Activated T-helper 1 cell treated with anti-CD3 and anti-CD28 coated beads, Interleukin-12 subunit alpha, Interleukin-12 subunit beta, Interleukin-2, Interleukin-4 antibody, amounts not matched to agents 30 ng/mL and 10 ng/mL and 1 ng/mL, durations not matched to agents 14 hours and 24 hours and 36 hours (primary cell): ENCODE measurements at regions of chr19 and their contacts with region 1.

Region 1: DNA sequence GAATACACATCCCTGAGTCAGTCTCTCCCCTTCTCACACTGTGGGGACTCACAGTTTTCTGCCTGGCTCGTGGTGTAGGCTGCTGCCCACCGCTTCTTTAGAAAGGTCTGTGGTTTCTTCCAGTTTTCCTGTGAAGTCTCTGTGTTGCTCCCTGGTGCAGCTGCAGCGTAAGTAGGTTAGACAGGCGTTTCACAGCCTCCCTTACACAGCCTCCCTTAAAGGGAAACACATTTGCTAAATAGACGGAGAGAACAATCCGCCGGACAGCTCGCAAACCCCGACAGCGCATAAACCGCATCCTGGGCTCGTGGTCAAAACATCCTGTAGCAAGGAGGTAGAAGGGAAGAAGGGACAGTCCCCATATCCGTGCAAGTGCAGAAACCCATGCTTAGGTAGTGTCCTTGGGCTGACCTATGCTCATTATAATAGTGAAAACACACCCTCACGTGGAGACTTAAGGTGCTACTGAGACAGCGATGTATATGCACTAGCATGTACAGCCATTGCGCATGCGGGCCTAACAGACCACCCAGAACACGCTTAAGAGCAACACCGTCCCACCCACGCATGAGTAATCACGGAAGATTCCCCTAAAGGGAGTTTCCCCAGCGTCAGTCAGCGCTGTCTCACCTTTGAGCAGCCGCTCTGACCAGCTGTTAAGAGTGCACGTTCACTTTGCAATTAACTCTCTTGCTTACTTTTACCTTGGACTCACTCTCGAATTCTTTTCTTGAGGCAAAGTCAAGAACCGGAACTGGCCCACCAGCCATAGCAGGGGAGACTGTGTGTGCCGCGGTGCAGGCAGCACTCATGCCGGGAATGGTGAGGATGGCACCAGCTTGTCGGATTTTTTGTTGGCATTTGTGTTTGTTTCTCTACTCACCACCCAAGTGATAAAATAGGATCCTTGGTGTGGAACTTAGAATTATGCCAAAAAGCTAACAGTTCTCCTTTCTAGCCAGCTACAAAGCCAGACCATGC is 16.6 kb downstream of the SIGLEC8 start:
- DNase-seq: peak; percentile 85
- H3K4me3 Mint-ChIP-seq: peak overlapping the region; percentile 61
- H3K27ac Mint-ChIP-seq: peak overlapping the region; percentile 95
- H3K4me1 Mint-ChIP-seq: peaks cover 76% of the 10 kb centered on the region
- H3K27me3 Mint-ChIP-seq: peaks cover 19% of the 10 kb centered on the region

Region 2: DNA sequence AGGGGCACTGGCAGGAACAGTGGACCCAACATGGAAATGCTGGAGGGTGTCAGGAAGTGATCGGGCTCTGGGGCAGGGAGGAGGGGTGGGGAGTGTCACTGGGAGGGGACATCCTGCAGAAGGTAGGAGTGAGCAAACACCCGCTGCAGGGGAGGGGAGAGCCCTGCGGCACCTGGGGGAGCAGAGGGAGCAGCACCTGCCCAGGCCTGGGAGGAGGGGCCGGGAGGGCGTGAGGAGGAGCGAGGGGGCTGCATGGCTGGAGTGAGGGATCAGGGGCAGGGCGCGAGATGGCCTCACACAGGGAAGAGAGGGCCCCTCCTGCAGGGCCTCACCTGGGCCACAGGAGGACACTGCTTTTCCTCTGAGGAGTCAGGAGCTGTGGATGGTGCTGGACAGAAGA is 564.4 kb before region 1 on chr19:
- intact Hi-C with region 1: no loop called
- DNase-seq: no peak
- H3K4me3 Mint-ChIP-seq: no peak overlapping the region
- H3K27ac Mint-ChIP-seq: no peak overlapping the region
- H3K4me1 Mint-ChIP-seq: no peaks in the 10 kb centered on the region
- H3K27me3 Mint-ChIP-seq: peaks cover 13% of the 10 kb centered on the region

Region 3: DNA sequence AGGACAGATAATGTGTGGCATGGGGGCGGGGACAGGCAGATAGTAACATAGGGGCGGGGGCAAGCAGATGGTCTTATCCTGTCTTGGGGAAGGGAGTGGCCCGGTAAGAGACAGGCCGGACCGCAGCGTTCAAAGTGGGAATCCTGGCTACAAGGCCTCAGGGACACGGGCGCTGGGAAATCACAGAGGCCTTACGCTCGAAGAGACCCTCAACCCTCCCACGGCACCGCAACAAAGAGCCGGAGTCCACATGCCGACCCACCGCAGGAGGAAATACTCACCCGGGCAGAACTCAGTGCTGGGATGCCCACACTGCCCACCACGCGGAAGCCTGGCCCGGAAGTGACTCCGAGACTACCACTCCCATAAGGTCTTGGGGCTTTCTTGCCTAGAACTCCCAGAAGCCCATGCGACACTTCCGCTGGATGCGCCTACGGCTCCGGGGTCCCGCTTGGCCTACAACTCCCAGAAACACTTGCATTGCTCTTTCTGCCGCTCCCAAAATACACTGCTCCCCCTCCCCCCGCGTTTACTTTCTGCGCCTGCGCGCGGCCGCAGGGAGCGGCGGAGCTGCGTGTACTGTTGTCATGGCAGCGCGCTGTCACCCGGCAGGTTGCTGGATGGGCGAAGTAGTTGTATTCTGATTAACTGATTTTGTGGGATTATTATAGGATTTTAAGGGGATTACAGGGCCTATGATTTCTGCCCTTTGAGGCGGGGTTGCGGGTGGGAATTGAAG is 333.5 kb before region 1 on chr19 and contains the start of gene CTU1:
- intact Hi-C with region 1: loop called (anchors 1 kb)
- DNase-seq: peak; percentile 98
- H3K4me3 Mint-ChIP-seq: peak within 1 kb of the TSS; percentile 92
- H3K27ac Mint-ChIP-seq: peak within 1 kb of the TSS; percentile 96
- H3K4me1 Mint-ChIP-seq: peaks cover 24% of the 10 kb centered on the region
- H3K27me3 Mint-ChIP-seq: no peaks in the 10 kb centered on the region
- total RNA-seq, gene CTU1: 12.5 and 14.0 TPM in 2 replicates

Region 4: DNA sequence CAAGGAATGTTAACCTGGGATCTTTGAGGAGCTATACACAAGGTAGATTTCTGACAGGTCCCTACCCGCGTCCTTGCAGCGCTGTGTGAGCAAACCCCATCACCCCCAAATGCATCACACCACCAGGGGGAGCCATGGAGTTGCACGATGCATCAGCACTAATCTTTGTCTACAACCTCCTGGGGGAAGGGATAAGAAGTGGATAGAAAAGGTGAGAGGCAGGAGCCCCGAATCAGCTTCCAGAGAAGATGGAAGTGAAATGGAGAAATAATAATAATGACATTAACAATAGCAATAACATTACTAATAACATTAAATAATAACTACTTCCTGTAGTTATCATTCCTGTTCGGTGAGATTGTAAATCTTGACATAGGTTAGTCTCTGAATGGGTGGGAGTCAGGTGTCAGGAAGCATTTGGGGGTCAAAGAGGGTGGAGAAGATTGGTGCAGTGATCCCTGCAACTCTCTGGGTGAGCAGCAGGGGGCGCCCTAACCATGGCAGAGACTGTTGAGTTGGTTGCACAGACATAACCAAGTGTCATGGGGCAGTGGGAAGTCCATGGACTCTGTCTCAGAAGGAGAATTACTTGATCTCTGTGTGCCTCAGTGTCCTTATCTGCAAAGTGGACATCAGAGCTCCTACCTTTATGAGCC is 283.1 kb before region 1 on chr19:
- intact Hi-C with region 1: loop called (anchors 2 kb)
- DNase-seq: peak; percentile 60
- H3K4me3 Mint-ChIP-seq: no peak overlapping the region
- H3K27ac Mint-ChIP-seq: peak overlapping the region; percentile 41
- H3K4me1 Mint-ChIP-seq: peaks cover 9% of the 10 kb centered on the region
- H3K27me3 Mint-ChIP-seq: peaks cover 5% of the 10 kb centered on the region

Region 5: GRCh38 chr19:51367565-51368365 is 73.9 kb before region 1 on chr19:
- intact Hi-C with region 1: loop called (anchors 1 kb)
- DNase-seq: peak; percentile 95
- H3K4me3 Mint-ChIP-seq: peak overlapping the region; percentile 98
- H3K27ac Mint-ChIP-seq: peak overlapping the region; percentile 96
- H3K4me1 Mint-ChIP-seq: peaks cover 68% of the 10 kb centered on the region
- H3K27me3 Mint-ChIP-seq: no peaks in the 10 kb centered on the region

Region 6: DNA sequence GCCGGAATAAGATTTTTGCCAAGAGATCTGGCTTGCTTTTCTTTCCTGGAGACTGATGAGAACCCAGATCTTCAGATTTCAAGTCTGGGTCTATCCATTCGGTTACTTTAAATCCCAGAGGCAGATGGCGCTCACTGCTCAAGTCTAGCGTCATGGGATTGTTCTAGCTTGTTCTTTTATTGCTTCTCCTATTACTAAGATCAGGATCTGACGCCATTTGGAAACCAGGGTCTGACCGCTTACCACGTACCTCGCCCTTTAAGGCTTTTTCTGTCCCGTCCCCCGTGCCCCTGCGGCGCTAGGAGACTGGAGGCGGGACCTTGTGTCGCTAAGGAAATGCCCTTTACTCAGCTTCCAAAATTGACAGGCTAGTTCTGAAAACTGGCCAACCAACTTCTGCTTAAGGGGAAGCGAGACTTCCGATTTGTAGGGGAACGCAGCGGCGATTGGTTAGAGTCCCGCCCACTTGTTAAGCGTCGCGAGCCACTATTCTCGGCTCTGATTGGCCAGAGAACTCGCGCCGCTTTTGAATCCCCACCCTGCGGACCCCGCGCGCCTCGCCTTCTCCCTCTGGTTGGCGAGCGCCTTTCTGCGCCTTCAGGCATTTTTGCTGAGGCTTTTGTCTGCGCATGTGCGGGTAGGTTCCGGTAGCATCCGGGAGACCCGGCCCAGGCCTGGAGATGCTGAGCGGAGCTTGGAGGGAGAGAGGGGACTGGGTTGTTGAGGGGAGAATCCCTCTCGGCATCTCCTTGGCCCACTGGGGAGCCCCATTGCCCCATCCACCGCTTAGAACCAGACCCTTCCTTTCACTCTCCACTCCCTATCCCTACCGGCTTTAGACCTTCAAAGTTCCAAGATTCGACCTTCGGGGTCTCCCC is 47.5 kb before region 1 on chr19:
- intact Hi-C with region 1: loop called (anchors 1 kb)
- DNase-seq: peak; percentile 92
- H3K4me3 Mint-ChIP-seq: peak overlapping the region; percentile 88
- H3K27ac Mint-ChIP-seq: peak overlapping the region; percentile 90
- H3K4me1 Mint-ChIP-seq: peaks cover 55% of the 10 kb centered on the region
- H3K27me3 Mint-ChIP-seq: no peaks in the 10 kb centered on the region

Region 7: GRCh38 chr19:51473009-51473707 is 31.5 kb after region 1 on chr19:
- intact Hi-C with region 1: loop called (anchors 2 kb)
- DNase-seq: peak; percentile 63
- H3K4me3 Mint-ChIP-seq: no peak overlapping the region
- H3K27ac Mint-ChIP-seq: peak overlapping the region; percentile 55
- H3K4me1 Mint-ChIP-seq: peaks cover 31% of the 10 kb centered on the region
- H3K27me3 Mint-ChIP-seq: peaks cover 9% of the 10 kb centered on the region

Region 8: DNA sequence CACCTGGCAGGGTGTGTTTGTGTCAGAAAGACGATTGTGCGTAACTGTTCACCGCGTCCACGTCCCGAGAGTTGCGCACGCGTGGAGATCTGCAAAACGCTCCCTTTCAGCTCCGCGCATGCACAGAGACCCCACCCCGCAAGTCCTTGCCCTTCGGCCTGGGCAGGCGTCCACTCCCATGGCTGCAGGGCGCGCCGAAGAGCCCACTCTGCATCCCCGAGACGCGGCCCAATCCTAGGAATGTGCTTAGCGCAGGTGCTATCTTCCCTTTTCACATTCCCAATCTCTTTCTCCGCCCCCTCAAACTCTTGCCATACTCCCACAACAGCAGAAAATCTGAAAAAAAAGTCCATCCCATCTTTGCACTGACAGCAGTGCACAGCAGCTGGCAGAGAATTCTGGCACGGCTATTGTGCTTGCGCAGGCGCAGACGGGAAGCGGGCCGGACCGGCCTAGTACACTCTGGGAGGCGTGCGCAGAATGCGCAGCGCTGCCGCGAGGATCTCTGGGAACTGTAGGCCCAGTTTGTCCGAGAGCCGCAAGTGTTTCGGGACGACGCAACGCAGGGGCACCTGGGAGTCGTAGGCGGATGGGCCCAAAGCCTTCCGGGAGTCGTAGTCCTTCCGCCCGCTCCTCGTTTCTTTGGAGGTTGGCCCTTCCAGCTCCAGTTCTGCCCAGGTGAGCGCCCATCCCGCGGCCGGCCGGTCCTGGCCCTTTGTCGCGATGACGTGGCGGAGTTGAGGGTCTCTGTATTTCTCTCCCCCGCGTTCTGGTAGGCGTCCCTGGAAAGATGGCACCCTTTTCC is 152.5 kb after region 1 on chr19:
- intact Hi-C with region 1: loop called (anchors 1 kb)
- DNase-seq: peak; percentile 95
- H3K4me3 Mint-ChIP-seq: peak overlapping the region; percentile 92
- H3K27ac Mint-ChIP-seq: peak overlapping the region; percentile 78
- H3K4me1 Mint-ChIP-seq: peaks cover 20% of the 10 kb centered on the region
- H3K27me3 Mint-ChIP-seq: no peaks in the 10 kb centered on the region